Activated T-helper 1 cell treated with anti-CD3 and anti-CD28 coated beads, Interleukin-12 subunit alpha, Interleukin-12 subunit beta, Interleukin-2, Interleukin-4 antibody, amounts not matched to agents 30 ng/mL and 10 ng/mL and 1 ng/mL, durations not matched to agents 14 hours and 24 hours and 36 hours (primary cell): ENCODE measurements at regions of chr16 and their contacts with region 1.

Region 1: GRCh38 chr16:8797364-8798173 is at the starts of genes PMM2 and TMEM186:
- DNase-seq: peak; percentile 95
- H3K4me3 Mint-ChIP-seq: peak within 1 kb of the TSS; percentile 96
- H3K27ac Mint-ChIP-seq: peak within 1 kb of the TSS; percentile 82
- H3K4me1 Mint-ChIP-seq: peaks cover 42% of the 10 kb centered on the region
- H3K27me3 Mint-ChIP-seq: no peaks in the 10 kb centered on the region
- total RNA-seq, gene PMM2: 82.9 and 88.7 TPM in 2 replicates
- total RNA-seq, gene TMEM186: 16.9 and 19.0 TPM in 2 replicates

Region 2: GRCh38 chr16:8567750-8568617 is 229.6 kb before region 1 on chr16:
- intact Hi-C with region 1: loop called (anchors 10 kb)
- DNase-seq: peak; percentile 66
- H3K4me3 Mint-ChIP-seq: no peak overlapping the region
- H3K27ac Mint-ChIP-seq: peak overlapping the region; percentile 8
- H3K4me1 Mint-ChIP-seq: peaks cover 10% of the 10 kb centered on the region
- H3K27me3 Mint-ChIP-seq: peaks cover 5% of the 10 kb centered on the region

Region 3: DNA sequence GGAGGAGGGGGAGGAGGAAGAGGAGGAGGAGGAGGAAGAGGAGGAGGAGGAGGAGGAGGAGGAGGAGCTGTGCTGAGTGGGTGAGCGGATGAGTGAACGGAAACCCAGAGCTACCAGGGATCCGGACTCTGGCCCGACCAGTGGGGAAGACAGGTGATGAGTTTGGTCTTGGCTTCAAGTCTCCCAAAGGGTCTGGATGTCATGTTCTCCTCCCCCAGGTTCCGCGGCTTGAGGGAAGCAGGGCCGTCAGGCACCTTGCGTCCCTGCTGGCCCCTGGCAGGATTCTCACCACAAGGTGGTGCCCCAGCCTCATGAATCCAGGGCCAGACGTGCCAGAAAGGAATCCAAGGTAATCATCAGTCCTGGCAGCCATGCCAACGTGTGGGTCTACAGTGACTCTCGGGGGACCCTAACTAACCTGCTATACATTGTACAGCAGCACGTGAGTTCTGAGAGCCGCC is 136.7 kb before region 1 on chr16:
- intact Hi-C with region 1: loop called (anchors 1 kb)
- DNase-seq: peak; percentile 46
- H3K4me3 Mint-ChIP-seq: no peak overlapping the region
- H3K27ac Mint-ChIP-seq: no peak overlapping the region
- H3K4me1 Mint-ChIP-seq: no peaks in the 10 kb centered on the region
- H3K27me3 Mint-ChIP-seq: no peaks in the 10 kb centered on the region

Region 4: DNA sequence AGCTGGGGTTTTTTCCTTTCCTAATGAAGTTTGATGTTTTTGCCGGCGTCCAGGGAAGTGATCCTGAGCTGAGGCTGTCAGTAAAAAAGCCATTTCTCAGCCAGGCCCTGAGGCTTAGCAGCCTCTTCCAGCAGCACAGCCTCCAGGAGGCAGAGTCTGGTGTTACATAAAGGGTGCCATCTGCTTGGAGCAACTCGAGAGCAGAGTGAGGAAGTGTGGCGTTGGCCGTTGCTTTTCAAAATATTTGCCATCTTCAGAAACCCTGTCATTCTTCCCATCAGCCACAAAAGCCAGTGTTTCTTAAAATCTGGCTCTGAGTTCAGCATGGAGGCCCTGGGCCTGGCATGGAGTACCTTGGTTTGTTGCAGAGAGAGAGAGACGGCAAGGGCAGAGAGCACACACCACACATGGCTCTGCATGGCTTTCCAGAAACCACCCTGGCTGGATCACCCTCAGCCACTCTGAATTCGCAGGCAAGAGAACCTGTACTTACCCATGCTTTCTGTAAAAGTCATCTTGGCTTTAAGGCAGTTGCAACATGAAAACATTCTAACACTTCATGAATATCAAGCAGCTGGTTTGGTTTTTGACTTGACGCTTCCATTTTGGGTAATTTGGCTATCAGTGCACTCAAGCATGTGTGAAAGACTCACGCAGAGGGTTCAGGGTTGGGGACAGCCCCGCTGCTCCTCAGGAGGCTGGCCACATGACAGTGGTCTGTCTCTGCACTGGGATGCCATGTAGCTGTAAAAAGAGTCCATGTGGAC is 21.1 kb after region 1 on chr16:
- intact Hi-C with region 1: loop called (anchors 2 kb)
- DNase-seq: no peak
- H3K4me3 Mint-ChIP-seq: no peak overlapping the region
- H3K27ac Mint-ChIP-seq: peak overlapping the region; percentile 70
- H3K4me1 Mint-ChIP-seq: peaks cover 44% of the 10 kb centered on the region
- H3K27me3 Mint-ChIP-seq: no peaks in the 10 kb centered on the region

Region 5: DNA sequence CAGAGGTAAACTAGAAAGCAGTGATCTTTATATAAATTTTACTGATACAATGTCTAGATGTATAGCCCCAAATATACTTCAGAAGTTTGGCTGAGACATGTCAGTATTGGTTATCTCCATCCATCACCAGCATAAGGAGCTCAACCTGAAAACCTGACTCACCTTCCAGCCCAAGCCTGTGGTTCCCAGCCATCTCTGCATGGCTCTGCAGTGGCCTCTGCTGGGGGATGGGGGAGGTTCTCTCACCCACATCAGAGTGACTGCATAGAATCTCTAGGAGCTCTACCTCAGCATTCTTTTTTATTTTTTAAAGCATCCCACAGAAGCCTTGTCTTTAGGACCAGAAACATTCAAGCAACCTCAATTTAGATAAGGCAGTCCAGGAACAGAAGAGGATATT is 138.9 kb after region 1 on chr16:
- intact Hi-C with region 1: loop called (anchors 5 kb)
- DNase-seq: peak; percentile 60
- H3K4me3 Mint-ChIP-seq: no peak overlapping the region
- H3K27ac Mint-ChIP-seq: peak overlapping the region; percentile 41
- H3K4me1 Mint-ChIP-seq: peaks cover 36% of the 10 kb centered on the region
- H3K27me3 Mint-ChIP-seq: no peaks in the 10 kb centered on the region

Region 6: GRCh38 chr16:9047686-9048301 is 250.2 kb after region 1 on chr16:
- intact Hi-C with region 1: loop called (anchors 1 kb)
- DNase-seq: peak; percentile 53
- H3K4me3 Mint-ChIP-seq: peak overlapping the region; percentile 20
- H3K27ac Mint-ChIP-seq: peak overlapping the region; percentile 61
- H3K4me1 Mint-ChIP-seq: peaks cover 27% of the 10 kb centered on the region
- H3K27me3 Mint-ChIP-seq: no peaks in the 10 kb centered on the region

Region 7: DNA sequence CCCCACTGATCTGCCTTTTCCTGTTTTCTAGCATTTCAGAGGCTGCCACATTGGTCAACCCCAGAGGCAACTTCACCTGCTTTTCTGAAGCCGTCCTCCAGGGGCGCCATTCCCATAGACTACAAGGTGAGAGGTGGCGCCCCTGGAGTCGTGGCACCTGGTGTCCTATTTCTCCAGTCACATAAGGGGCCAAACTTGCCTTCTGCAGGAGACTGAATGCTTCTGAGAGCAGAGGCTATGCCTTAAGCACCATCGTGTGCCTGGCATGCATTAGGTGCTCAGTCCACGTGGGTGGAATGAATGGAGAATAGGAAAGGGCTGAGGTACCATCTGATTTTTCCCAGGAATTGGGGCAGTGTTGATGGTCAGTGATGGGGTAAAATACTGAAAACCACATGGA is 458.6 kb after region 1 on chr16:
- intact Hi-C with region 1: no loop called
- DNase-seq: no peak
- H3K4me3 Mint-ChIP-seq: no peak overlapping the region
- H3K27ac Mint-ChIP-seq: no peak overlapping the region
- H3K4me1 Mint-ChIP-seq: no peaks in the 10 kb centered on the region
- H3K27me3 Mint-ChIP-seq: no peaks in the 10 kb centered on the region

Region 8: DNA sequence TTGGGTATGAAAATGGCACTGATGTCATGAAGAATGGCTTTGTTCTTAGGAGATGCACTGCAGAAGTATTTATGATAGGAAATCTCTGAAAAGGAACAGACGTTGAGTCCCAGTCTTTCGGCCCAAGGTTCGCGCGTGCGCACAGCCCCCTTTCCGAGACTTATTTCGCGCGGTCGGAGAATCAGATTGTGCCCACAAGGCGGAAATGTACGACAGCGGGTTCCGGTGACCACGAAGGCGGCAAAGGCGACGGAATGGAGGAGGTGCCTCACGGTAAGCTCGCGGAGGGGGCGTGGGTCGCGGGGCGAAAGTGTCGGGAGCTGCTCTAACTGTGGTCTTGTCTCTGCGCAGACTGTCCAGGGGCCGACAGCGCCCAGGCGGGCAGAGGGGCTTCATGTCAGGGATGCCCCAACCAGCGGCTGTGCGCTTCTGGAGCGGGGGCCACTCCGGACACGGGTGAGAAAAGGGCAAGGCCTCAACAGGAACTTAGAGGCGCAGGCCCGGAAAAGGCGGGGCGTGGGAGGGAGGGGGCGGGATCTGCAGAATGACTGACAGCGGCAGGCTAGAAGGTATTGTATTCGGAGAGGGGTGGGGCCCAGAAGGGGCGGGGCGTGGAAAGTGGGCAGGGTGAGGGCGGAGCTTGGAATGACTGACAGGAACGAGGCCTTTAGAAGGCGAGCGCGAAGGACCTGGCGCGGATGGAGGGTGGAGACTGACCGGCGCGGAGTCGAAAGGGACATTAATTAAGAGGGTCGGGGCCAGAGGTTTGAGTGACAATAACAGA is 1946.2 kb after region 1 on chr16 and contains the start of gene NUBP1:
- intact Hi-C with region 1: loop called (anchors 5 kb)
- DNase-seq: peak; percentile 97
- H3K4me3 Mint-ChIP-seq: peak within 1 kb of the TSS; percentile 87
- H3K27ac Mint-ChIP-seq: peak within 1 kb of the TSS; percentile 93
- H3K4me1 Mint-ChIP-seq: peaks cover 57% of the 10 kb centered on the region
- H3K27me3 Mint-ChIP-seq: no peaks in the 10 kb centered on the region
- total RNA-seq, gene NUBP1: 39.8 and 42.4 TPM in 2 replicates